ENCODE measurements at regions of chr20 and their contacts with region 1.

Region 1: GRCh38 chr20:37534401-37535157 is 6.9 kb upstream of the BLCAP start:
- DNase-seq: no peak
- ATAC-seq: peak; percentile 91 to 92
- H3K4me3 ChIP-seq: no peak overlapping the region
- H3K27ac ChIP-seq: no peak overlapping the region
- H3K4me1 ChIP-seq: peaks cover 8% of the 10 kb centered on the region
- H3K27me3 ChIP-seq: peaks cover under 1% of the 10 kb centered on the region
- CTCF ChIP-seq: peak; percentile 89

Region 2: GRCh38 chr20:37202267-37202943 is 332.2 kb before region 1 on chr20:
- intact Hi-C with region 1: loop called (anchors 10 kb)
- DNase-seq: no peak
- ATAC-seq: peak; percentile 88 to 91
- H3K4me3 ChIP-seq: no peak overlapping the region
- H3K27ac ChIP-seq: peak overlapping the region; percentile 59
- H3K4me1 ChIP-seq: peaks cover 4% of the 10 kb centered on the region
- H3K27me3 ChIP-seq: no peaks in the 10 kb centered on the region
- CTCF ChIP-seq: peak; percentile 81

Region 3: DNA sequence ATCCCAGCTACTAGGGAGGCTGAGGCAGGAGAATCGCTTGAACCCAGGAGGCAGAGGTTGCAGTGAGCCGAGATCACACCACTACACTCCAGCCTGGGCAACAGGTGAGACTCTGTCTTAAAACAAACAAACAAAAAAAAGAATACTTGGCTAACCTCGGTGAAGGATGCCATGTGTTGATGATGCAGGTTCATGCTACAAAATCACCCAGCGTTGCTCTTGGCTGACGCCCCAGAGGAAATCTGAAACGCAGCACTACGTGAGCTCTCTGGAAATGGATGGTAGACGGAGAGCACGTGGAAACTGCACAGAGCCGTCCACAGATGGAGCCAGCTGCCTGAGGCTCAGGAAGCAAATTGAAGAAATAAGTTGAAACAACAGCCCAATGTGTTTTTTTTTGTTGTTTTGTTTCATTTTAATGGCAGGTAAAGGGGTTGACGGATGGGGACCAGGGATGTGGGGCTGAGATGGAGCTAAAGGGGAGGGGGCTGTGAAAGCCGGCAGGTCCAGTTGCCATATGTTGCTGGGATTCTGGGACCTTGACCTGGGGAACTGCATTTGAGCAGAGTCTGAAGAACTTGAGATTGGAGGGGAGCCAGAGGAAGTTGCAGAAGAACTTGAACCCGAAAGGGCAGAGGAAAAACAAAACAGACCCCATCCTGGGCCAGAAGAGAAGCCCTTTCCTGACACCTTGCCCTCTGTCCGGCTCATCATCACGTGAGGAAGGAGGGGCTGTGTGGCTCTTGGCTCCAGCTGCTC is 257.9 kb before region 1 on chr20:
- intact Hi-C with region 1: loop called (anchors 10 kb)
- DNase-seq: no peak
- ATAC-seq: peak; percentile 80 to 81
- H3K4me3 ChIP-seq: no peak overlapping the region
- H3K27ac ChIP-seq: peak overlapping the region; percentile 44
- H3K4me1 ChIP-seq: peaks cover 19% of the 10 kb centered on the region
- H3K27me3 ChIP-seq: no peaks in the 10 kb centered on the region
- CTCF ChIP-seq: no peak

Measured in lower lobe of right lung (tissue), 2 donors.